Right cardiac atrium (tissue), 5 donors: ENCODE measurements at regions of chr5 and their contacts with region 1.

Region 1: DNA sequence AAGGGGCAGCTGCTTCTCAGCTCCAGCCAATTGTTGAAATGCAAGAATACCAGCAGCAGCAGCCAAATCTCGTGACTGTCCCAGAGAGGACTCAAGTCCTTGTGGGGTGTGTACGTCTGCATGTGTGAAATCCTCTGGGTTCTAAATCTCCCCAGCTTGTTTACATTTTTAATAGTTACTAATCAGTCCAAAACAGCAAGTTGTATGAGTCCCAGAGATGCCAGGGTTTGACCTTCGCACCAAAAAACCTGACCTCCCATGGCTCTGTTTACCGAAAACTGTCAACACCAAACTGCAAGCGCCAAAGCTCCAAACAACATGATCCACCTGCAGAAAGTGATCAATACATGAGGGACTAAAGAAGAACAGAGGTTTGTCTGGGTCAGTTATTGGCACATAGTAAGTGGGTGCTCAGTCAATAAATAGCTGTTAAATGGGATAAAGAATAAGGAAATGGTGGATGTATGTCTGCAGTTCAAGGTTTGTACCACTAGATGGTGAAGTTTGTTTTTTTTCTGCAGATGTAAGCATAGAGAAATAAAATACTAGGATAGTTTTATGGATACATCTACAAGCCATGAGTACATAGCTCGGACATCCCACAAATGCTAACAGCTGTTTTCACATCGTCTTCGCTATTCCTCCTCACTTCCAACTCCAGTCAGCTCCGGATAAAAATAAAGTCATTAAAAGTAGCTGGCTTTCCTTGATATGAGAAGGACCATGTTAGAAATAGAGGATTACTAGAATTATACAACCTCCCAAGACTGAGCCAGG is 85.3 kb upstream of the ADRB2 start:
- DNase-seq: peak in 1 of 3 donors; percentile 55
- ATAC-seq: peak; percentile 60 to 70
- H3K4me3 ChIP-seq: no peak overlapping the region
- H3K27ac ChIP-seq: no peak overlapping the region
- H3K4me1 ChIP-seq: peaks cover 8% of the 10 kb centered on the region
- H3K27me3 ChIP-seq: no peaks in the 10 kb centered on the region

Region 2: GRCh38 chr5:148963664-148964063 is 222.5 kb after region 1 on chr5:
- intact Hi-C with region 1: loop called in 2 of 4 experiments (anchors 10 kb)
- DNase-seq: no peak
- ATAC-seq: peak in 1 of 2 donors; percentile 5
- H3K4me3 ChIP-seq: no peak overlapping the region
- H3K27ac ChIP-seq: no peak overlapping the region
- H3K4me1 ChIP-seq: no peaks in the 10 kb centered on the region
- H3K27me3 ChIP-seq: no peaks in the 10 kb centered on the region

Region 3: DNA sequence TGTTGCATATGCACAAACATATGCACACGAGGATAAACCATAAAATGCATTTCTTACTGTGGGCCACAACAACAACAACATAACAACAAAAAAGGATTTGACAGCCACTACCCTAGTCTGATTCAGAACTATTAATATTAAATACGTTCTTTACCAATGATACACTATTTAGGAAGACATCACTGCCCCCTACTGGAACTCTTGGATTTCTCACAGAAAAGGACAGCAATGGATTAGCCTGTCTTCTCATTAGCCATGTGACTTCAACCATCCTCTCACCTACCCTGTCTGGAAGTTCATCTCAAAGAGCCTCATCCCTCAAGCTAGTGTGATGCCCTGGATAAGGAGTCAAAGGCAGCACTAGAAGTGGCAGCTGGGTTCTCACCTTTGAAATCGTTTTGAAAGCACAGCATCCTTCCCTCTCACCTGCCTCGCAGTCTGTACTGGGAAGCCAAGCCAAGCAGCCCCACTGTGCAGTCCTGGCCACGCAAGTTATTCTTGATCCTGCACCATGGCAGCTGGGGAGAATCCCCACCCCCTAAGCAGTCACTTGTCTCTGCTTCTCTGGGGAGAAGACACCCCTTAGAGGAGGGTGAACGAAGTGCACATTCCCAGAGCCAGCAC is 257.1 kb after region 1 on chr5:
- intact Hi-C with region 1: loop called in 3 of 4 experiments (anchors 2 to 5 kb)
- DNase-seq: no peak
- ATAC-seq: peak; percentile 50 to 64
- H3K4me3 ChIP-seq: no peak overlapping the region
- H3K27ac ChIP-seq: no peak overlapping the region
- H3K4me1 ChIP-seq: peaks cover 1% of the 10 kb centered on the region
- H3K27me3 ChIP-seq: no peaks in the 10 kb centered on the region

Region 4: GRCh38 chr5:149114403-149115312 is 373.5 kb after region 1 on chr5:
- intact Hi-C with region 1: loop called in 2 of 4 experiments (anchors 5 kb)
- DNase-seq: peak; percentile 42 to 69 (median 66)
- ATAC-seq: peak; percentile 97
- H3K4me3 ChIP-seq: no peak overlapping the region
- H3K27ac ChIP-seq: no peak overlapping the region
- H3K4me1 ChIP-seq: peaks cover 3% of the 10 kb centered on the region
- H3K27me3 ChIP-seq: no peaks in the 10 kb centered on the region

Region 5: DNA sequence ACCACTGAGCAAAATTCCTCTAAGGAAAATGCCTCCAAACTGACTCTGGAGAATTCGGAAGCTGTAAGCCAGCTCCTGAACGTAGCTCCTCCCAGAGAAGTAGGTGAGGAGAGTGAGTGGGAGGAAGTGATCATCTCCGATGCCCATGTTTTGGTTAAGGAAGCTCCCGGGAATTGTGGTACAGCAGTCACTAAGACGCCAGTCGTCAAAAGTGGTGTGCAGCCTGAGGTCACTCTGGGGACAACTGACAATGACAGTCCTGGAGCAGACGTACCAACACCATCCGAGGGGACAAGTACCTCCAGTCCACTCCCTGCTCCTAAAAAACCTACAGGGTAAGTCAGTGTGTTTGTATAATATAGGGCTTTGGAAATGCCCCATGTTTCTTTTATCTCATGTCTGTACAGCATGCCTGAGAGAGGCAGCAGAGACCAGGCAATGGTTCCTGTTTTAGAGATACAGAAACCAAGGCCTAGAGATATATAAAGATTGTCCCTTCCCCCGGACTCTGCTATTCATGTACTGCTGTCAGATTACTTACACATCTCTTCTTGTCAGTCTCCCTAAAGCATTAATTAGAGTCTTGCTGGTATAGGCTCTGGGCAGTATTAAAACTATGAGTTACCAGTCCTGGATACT is 1283.3 kb after region 1 on chr5:
- intact Hi-C with region 1: no loop called
- DNase-seq: no peak
- ATAC-seq: no peak
- H3K4me3 ChIP-seq: no peak overlapping the region
- H3K27ac ChIP-seq: peak overlapping the region; percentile 59
- H3K4me1 ChIP-seq: no peaks in the 10 kb centered on the region
- H3K27me3 ChIP-seq: no peaks in the 10 kb centered on the region